T-cell (primary cell): ENCODE measurements at regions of chr7 and their contacts with region 1.

Region 1: DNA sequence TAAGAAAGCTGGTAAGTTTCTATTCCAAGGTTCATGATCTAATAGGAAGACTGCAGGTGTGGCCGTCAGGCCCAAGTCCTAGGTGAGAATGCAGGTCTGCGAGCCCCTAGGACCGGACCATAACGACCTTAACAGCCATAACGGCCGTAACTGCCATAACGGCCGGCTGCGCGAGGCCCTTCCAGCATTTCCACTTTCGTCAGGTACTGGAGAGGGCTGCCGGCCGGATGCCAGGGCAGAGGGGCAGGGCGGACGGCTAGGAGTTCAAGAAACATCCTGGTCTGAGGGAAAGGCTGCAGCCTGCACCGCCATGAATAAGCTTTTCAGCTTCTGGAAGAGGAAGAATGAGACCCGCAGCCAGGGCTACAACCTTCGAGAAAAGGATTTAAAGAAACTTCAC is at the start of gene ANKRD7:
- DNase-seq: no peak
- ATAC-seq: no peak
- H3K4me3 ChIP-seq: no peak within 1 kb of the TSS
- H3K4me3 Mint-ChIP-seq: no peak within 1 kb of the TSS
- H3K27ac ChIP-seq: no peak within 1 kb of the TSS
- H3K27ac Mint-ChIP-seq: no peak within 1 kb of the TSS
- H3K4me1 ChIP-seq: no peaks in the 10 kb centered on the region
- H3K4me1 Mint-ChIP-seq: no peaks in the 10 kb centered on the region
- H3K27me3 ChIP-seq: peaks cover 0 to 7% of the 10 kb centered on the region in 2 experiments
- H3K27me3 Mint-ChIP-seq: peaks cover 3 to 11% of the 10 kb centered on the region in 2 donors
- total RNA-seq, gene ANKRD7: 0.29 to 0.88 (median 0.52) TPM in 4 of 5 donors, not detected in the other

Region 2: GRCh38 chr7:118169146-118169545 is 55.4 kb before region 1 on chr7:
- CTCF ChIA-PET with region 1: no interaction called
- POLR2A ChIA-PET with region 1: interaction called in 1 of 2 experiments, 12 read pairs
- DNase-seq: no peak
- ATAC-seq: no peak
- H3K4me3 ChIP-seq: no peak overlapping the region
- H3K4me3 Mint-ChIP-seq: no peak overlapping the region
- H3K27ac ChIP-seq: no peak overlapping the region
- H3K27ac Mint-ChIP-seq: no peak overlapping the region
- H3K4me1 ChIP-seq: no peaks in the 10 kb centered on the region
- H3K4me1 Mint-ChIP-seq: no peaks in the 10 kb centered on the region
- H3K27me3 ChIP-seq: no peaks in the 10 kb centered on the region
- H3K27me3 Mint-ChIP-seq: peaks cover 44 to 45% of the 10 kb centered on the region in 2 donors

Region 3: DNA sequence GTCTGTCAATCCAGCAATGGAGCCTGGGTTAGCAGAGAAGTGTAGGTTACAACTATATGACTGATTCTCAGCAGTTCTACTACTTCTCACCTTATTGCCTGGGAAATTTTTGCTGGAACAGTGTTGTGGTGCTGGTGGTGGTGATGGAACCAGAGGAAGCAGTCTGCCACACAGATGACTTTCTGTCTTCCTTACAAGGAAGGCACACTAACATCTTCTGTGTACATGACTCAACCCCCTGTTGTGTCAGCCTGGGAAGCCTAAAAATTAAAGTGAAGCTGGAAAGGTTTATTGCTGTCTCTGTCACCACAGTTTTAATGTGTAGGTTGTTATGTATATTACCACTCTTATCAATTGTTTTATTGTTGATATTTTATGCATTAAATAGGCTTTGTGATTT is 40.3 kb after region 1 on chr7:
- CTCF ChIA-PET with region 1: no interaction called
- POLR2A ChIA-PET with region 1: no interaction called
- DNase-seq: no peak
- ATAC-seq: no peak
- H3K4me3 ChIP-seq: no peak overlapping the region
- H3K4me3 Mint-ChIP-seq: no peak overlapping the region
- H3K27ac ChIP-seq: no peak overlapping the region
- H3K27ac Mint-ChIP-seq: no peak overlapping the region
- H3K4me1 ChIP-seq: no peaks in the 10 kb centered on the region
- H3K4me1 Mint-ChIP-seq: no peaks in the 10 kb centered on the region
- H3K27me3 ChIP-seq: peaks cover 0 to 4% of the 10 kb centered on the region in 2 experiments
- H3K27me3 Mint-ChIP-seq: peaks cover 7 to 14% of the 10 kb centered on the region in 2 donors